Activated CD8-positive, alpha-beta memory T cell treated with anti-CD3 and anti-CD28 coated beads, Interleukin-2, amount 10 ng/mL, durations not matched to agents 7 days and 5 days (primary cell): ENCODE measurements at regions of chr14 and their contacts with region 1.

Region 1: DNA sequence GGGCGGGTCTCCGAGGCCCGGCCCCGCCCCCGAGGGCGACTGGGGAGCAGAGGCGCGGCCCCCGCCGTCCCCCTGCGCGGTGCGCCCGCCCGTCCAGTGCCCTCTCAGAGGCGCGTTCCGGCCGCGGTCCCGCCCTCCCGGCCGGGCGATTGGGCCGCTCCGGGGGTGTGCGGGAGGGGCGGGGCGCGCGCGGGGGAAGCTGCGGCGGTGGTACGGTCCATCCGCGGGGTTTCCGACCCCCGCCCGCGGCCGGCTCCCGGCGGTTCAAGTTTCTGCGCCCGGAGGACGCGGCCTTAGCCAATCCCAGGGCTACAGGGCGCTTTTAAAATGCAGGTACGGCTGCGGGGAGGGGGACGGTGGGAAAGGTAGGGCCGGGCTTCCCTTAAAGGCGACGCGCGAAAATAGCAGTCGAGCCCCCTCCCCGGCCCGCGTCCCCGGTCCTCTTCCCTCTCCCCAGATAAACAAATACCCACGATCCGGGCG is 317 bp upstream of the CCDC85C start:
- DNase-seq: peak; percentile 94
- ATAC-seq: peak; percentile 94
- H3K4me3 Mint-ChIP-seq: peak overlapping the region; percentile 77
- H3K27ac Mint-ChIP-seq: peak overlapping the region; percentile 86
- H3K4me1 Mint-ChIP-seq: peaks cover 26% of the 10 kb centered on the region
- H3K27me3 Mint-ChIP-seq: peaks cover 8% of the 10 kb centered on the region

Region 2: GRCh38 chr14:99586761-99587459 is 17.4 kb before region 1 on chr14:
- CTCF ChIA-PET with region 1: no interaction called
- DNase-seq: no peak
- ATAC-seq: no peak
- H3K4me3 Mint-ChIP-seq: no peak overlapping the region
- H3K27ac Mint-ChIP-seq: no peak overlapping the region
- H3K4me1 Mint-ChIP-seq: peaks cover 6% of the 10 kb centered on the region
- H3K27me3 Mint-ChIP-seq: no peaks in the 10 kb centered on the region

Region 3: DNA sequence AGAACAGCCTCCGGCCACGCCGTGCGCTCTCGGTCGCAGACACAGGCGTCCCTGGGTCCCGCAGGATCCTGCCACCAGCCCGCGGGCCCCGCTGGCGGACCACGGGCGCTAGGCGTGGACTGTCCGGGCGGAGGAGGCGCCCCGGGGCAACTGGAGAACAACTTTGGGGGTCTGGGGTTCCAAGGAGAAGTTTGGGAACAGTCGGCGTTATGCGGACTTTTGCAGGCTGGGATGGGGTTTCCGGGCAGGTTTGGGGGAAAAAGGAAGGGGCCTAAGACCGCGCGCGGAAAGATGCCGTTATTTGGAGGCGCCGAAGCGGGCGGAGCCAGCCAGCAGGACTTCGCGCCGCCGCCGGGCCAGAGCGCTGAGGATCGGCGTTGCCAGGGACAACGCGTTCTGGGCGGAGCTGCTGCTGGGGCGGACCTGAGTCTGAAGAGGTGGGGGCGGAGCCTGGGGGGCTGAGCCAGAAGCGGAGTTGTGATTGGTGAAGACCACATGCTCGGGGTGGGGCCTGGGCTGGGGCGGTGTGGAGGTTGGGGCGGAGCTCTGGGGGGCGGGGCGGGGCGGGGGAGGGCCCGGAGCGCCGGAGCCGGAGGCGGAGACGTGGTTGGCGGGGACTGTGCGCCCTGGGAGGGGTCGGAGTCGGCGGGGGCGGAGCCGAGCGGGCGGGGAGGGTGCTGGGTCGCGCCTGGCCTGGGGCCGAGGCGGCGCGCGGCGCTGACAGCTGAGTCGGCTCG is 79.5 kb after region 1 on chr14 and contains the start of gene CYP46A1:
- CTCF ChIA-PET with region 1: interaction called, 13 read pairs
- DNase-seq: peak; percentile 100
- ATAC-seq: peak; percentile 89
- H3K4me3 Mint-ChIP-seq: peak within 1 kb of the TSS; percentile 79
- H3K27ac Mint-ChIP-seq: peak within 1 kb of the TSS; percentile 81
- H3K4me1 Mint-ChIP-seq: peaks cover 11% of the 10 kb centered on the region
- H3K27me3 Mint-ChIP-seq: peaks cover 26% of the 10 kb centered on the region
- total RNA-seq, gene CYP46A1: 0.15 TPM in 1 of 2 experiments, not detected in the other